MCF 10A (cell line): ENCODE measurements at regions of chr12 and their contacts with region 1.

Region 1: DNA sequence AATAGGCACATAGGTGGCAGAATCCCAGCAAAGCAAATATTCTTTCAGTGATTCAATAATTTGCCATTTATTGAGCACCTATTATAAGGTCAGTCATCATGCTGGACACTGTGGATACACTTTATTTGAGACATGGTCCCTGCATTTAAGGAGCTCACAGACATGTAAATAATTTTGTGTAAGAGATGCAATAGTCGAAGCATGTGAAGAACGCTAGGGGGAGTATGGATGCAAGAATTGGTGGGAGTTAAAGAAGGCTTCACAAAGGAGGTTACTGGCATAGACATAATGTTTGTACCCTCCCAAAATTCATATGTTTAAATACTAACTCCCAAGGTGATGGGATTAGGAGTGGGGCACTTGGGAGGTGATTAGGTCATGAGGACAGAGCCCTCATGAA is 260.6 kb upstream of the GARIN6 start:
- DNase-seq: peak; percentile 70
- H3K4me3 Mint-ChIP-seq: no peak overlapping the region
- H3K27ac Mint-ChIP-seq: no peak overlapping the region
- H3K4me1 Mint-ChIP-seq: peaks cover 4% of the 10 kb centered on the region
- H3K27me3 Mint-ChIP-seq: no peaks in the 10 kb centered on the region
- CTCF ChIP-seq: peak; percentile 66

Region 2: DNA sequence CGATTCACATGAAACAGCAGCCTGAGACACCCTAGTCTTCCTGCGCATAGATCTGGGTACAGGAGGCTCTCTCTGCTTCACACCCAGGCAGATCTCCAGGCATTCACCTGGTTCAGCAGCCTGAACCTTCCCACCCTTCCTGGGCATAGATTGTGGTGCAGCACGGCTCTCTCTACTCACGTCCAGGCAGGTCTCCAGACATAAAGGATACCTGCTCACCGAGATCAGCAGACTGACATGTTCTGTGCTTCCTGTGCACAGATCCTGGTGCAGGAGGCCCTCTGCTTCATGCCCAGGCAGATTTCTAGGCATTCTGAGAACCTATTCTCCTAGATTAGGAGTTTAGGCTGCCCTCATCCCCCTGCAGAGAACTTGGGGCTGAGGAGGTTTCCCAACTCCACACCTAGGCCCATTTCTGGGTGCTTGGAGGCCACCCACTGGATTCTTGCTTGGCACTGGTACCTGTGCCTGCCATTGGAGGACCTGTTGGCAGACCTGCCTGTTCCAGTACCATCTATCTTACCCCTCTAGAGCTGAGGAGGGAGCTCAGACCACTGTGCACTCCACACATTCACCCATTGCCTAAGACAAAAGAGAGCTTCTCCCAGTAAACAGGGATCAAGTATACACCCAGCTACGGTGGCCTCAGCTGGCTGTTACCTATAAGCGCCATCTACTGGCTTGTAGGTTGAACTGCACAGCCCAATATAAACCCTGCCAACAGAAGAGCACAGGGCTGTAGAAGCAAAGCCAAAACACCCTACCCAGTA is 232.7 kb after region 1 on chr12:
- CTCF ChIA-PET with region 1: interaction called, 3 read pairs
- POLR2A ChIA-PET with region 1: no interaction called
- intact Hi-C with region 1: loop called (anchors 1 kb)
- DNase-seq: peak; percentile 43
- H3K4me3 Mint-ChIP-seq: no peak overlapping the region
- H3K27ac Mint-ChIP-seq: no peak overlapping the region
- H3K4me1 Mint-ChIP-seq: no peaks in the 10 kb centered on the region
- H3K27me3 Mint-ChIP-seq: no peaks in the 10 kb centered on the region
- CTCF ChIP-seq: peak; percentile 59

Region 3: DNA sequence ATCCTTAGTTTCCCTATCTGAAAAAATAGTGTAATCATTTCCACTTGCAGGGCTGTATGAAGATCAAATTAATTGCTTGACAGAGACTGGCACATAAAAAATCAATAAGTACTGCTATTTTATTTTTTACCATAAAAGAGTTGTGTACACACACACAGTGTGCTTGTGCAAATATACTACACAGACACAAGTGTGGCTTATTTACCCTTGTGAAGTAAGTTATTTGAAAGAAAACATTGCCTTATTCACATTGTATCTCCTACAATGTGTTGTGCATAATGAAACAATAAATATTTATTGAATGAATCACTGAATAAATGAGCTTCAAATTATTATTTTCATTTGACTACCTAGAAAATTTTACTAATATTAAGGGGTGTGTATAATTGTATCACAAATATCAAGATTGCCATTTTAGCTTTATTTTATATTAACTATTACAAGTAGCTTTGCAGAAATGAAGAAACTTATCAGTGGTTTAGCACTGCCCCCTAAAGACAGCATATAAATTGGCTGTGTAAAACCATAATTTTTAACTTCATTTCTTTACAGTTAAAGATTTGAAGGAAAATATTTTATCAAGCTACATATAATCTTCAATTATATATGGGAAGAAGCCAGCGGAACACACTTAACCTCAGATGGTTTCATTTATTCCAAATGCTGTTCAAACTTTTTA is 271.9 kb after region 1 on chr12:
- CTCF ChIA-PET with region 1: interaction called, 11 read pairs
- POLR2A ChIA-PET with region 1: interaction called, 3 read pairs
- intact Hi-C with region 1: loop called (anchors 1 kb)
- DNase-seq: peak; percentile 6
- H3K4me3 Mint-ChIP-seq: no peak overlapping the region
- H3K27ac Mint-ChIP-seq: no peak overlapping the region
- H3K4me1 Mint-ChIP-seq: no peaks in the 10 kb centered on the region
- H3K27me3 Mint-ChIP-seq: no peaks in the 10 kb centered on the region
- CTCF ChIP-seq: peak; percentile 40

Region 4: DNA sequence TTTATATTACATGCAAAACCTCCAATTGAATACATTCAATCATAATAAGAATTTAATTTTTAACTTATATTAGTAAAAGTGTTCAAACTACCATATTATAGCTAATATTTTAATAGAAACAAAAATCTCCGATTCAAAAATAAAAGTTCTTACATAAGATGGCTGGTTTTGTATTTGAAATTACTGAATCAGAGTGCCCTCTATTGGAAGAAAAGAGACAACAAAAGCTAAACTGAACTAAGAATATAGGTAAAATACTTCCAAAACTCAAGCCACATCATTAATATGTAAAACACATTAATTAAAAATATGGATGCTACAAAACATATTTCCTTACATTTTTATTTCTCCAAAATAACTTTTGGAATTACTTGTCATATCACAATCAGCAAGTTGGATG is 380.9 kb after region 1 on chr12:
- CTCF ChIA-PET with region 1: interaction called, 20 read pairs
- POLR2A ChIA-PET with region 1: interaction called, 4 read pairs
- intact Hi-C with region 1: loop called (anchors 1 kb)
- DNase-seq: peak; percentile 35
- H3K4me3 Mint-ChIP-seq: no peak overlapping the region
- H3K27ac Mint-ChIP-seq: no peak overlapping the region
- H3K4me1 Mint-ChIP-seq: no peaks in the 10 kb centered on the region
- H3K27me3 Mint-ChIP-seq: no peaks in the 10 kb centered on the region
- CTCF ChIP-seq: peak; percentile 52